ENCODE measurements at regions of chr1 and their contacts with region 1.

Region 1: DNA sequence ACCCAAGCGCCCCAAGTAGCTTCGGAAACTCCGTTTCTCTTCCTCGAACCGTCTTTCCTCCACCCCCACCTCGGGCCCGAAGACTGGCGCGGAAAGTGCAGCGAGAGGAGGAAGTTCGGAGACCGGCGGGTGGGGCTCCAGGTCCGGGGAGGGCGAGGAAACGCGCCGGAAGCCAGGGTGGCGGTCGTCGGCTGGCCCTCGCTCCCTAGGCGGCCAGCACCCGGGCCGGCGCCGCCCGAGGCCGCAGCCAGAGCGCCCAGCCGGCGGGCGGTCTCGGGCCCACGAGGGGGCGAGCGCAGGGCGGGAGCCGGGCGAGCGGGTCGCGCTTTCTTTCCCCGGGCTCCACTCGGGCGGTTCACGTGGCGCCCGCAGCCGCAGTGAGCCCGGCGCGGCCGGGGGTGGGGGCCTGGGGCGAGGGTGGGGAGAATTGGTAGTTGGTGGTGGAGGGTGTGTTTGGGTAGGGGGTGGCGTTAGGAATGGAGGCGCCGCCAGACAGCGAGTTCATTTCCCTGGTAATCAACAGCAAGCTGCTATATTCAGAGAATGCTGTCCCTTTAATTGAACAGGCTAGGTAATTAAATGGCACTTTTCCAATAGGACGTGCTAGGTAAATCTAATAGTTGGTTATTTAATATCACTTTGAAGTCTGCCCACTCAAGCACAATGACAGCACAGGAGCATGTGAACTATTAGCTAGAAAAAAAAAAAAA is 6.7 kb downstream of the LMO4 start:
- DNase-seq: peak; percentile 73 to 80
- ATAC-seq: peak; percentile 54 to 82 (median 64)
- H3K4me3 ChIP-seq: peak overlapping the region; percentile 18 to 86 (median 70)
- H3K27ac ChIP-seq: peak overlapping the region; percentile 46 to 92 (median 82)
- H3K4me1 ChIP-seq: peaks cover 0 to 69% (median 57%) of the 10 kb centered on the region in 9 donors
- H3K27me3 ChIP-seq: no peaks in the 10 kb centered on the region
- CTCF ChIP-seq: peak in 6 of 9 donors; percentile 18 to 62 (median 48)

Region 2: GRCh38 chr1:86380257-86380861 is 955.0 kb before region 1 on chr1:
- intact Hi-C with region 1: loop called in 1 of 10 experiments (anchors 10 kb)
- DNase-seq: no peak
- ATAC-seq: peak in 5 of 8 donors; percentile 58 to 77 (median 65)
- H3K4me3 ChIP-seq: peak overlapping the region in 4 of 10 donors; percentile 10 to 43 (median 22)
- H3K27ac ChIP-seq: peak overlapping the region in 1 of 10 donors; percentile 31
- H3K4me1 ChIP-seq: peaks cover 0 to 23% (median 0%) of the 10 kb centered on the region in 9 donors
- H3K27me3 ChIP-seq: no peaks in the 10 kb centered on the region
- CTCF ChIP-seq: peak; percentile 39 to 94 (median 82)

Region 3: GRCh38 chr1:87370539-87370938 is 35.2 kb after region 1 on chr1:
- intact Hi-C with region 1: no loop called
- DNase-seq: no peak
- ATAC-seq: no peak
- H3K4me3 ChIP-seq: no peak overlapping the region
- H3K27ac ChIP-seq: no peak overlapping the region
- H3K4me1 ChIP-seq: peaks cover 0 to 26% (median 12%) of the 10 kb centered on the region in 9 donors
- H3K27me3 ChIP-seq: no peaks in the 10 kb centered on the region
- CTCF ChIP-seq: no peak

Region 4: GRCh38 chr1:87435484-87435883 is 100.2 kb after region 1 on chr1:
- intact Hi-C with region 1: loop called in 1 of 10 experiments (anchors 10 kb)
- DNase-seq: peak in 1 of 2 donors; percentile 18
- ATAC-seq: peak; percentile 54 to 86 (median 71)
- H3K4me3 ChIP-seq: no peak overlapping the region
- H3K27ac ChIP-seq: peak overlapping the region in 5 of 10 donors; percentile 20 to 51 (median 44)
- H3K4me1 ChIP-seq: peaks cover 0 to 37% (median 6%) of the 10 kb centered on the region in 9 donors
- H3K27me3 ChIP-seq: no peaks in the 10 kb centered on the region
- CTCF ChIP-seq: no peak

Region 5: GRCh38 chr1:87684194-87684593 is 348.9 kb after region 1 on chr1:
- intact Hi-C with region 1: loop called in 1 of 10 experiments (anchors 10 kb)
- DNase-seq: peak in 1 of 2 donors; percentile 9
- ATAC-seq: peak in 7 of 8 donors; percentile 55 to 77 (median 71)
- H3K4me3 ChIP-seq: peak overlapping the region; percentile 2 to 57 (median 52)
- H3K27ac ChIP-seq: peak overlapping the region in 8 of 10 donors; percentile 2 to 77 (median 58)
- H3K4me1 ChIP-seq: peaks cover 0 to 22% (median 10%) of the 10 kb centered on the region in 9 donors
- H3K27me3 ChIP-seq: no peaks in the 10 kb centered on the region
- CTCF ChIP-seq: no peak

Region 6: GRCh38 chr1:87812871-87813577 is 477.7 kb after region 1 on chr1:
- intact Hi-C with region 1: loop called in 1 of 10 experiments (anchors 10 kb)
- DNase-seq: no peak
- ATAC-seq: no peak
- H3K4me3 ChIP-seq: no peak overlapping the region
- H3K27ac ChIP-seq: no peak overlapping the region
- H3K4me1 ChIP-seq: peaks cover 0 to 3% (median 0%) of the 10 kb centered on the region in 9 donors
- H3K27me3 ChIP-seq: no peaks in the 10 kb centered on the region
- CTCF ChIP-seq: no peak

Region 7: GRCh38 chr1:87826681-87827251 is 491.4 kb after region 1 on chr1:
- intact Hi-C with region 1: loop called in 1 of 10 experiments (anchors 10 kb)
- DNase-seq: peak; percentile 25 to 73
- ATAC-seq: peak; percentile 68 to 97 (median 93)
- H3K4me3 ChIP-seq: peak overlapping the region in 7 of 10 donors; percentile 0 to 47 (median 17)
- H3K27ac ChIP-seq: peak overlapping the region in 4 of 10 donors; percentile 31 to 75 (median 58)
- H3K4me1 ChIP-seq: peaks cover 0 to 27% (median 0%) of the 10 kb centered on the region in 9 donors
- H3K27me3 ChIP-seq: no peaks in the 10 kb centered on the region
- CTCF ChIP-seq: no peak